ENCODE measurements at regions of chr5 and their contacts with region 1.

Region 1: DNA sequence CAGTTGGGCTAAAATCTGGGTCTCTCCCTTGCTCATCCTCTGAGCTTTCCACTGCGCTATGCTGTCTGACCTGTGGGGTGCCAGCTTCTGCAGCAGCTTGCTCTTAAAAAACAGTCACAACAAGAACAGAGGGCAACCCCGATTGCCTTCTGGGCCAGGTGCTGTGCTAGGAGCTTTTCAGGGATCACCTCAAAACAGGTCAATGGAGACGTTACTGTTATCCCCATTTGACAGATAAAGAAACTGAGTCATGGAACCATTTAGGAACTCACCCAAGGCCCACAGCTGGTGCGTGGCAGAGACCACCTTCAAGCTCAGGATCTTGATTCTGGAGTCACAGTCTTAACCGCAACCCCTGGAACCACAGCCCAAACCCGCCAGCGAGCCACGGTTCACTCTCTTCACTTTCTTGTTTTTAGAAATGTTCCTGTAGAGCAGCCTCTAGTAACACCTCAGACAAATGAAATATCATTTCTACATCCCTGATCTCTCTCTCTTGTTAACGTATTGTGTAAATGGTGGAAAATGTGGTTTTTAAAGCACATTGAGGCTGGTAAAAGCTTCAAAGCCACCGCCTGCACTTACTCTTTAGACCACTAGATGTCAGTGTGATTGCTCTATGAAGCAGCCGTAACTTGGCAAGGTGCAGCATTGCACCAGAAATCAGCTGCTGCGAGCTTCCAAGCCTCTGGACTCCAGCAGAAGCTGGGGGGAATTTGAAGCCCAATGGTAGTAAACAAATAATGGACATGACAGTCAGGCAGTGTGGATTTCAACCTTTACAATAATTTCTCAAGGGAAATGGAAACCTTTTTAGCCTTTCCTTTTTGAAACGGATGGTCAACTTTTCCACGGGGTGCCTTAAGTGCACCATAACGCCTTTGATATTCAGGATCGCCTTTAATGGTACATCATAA is 1.7 kb downstream of the FYB1 start:
- DNase-seq: peak; percentile 80
- H3K4me3 ChIP-seq: no peak overlapping the region
- H3K27ac ChIP-seq: peak overlapping the region; percentile 69
- H3K4me1 ChIP-seq: peaks cover 52% of the 10 kb centered on the region
- H3K27me3 ChIP-seq: no peaks in the 10 kb centered on the region
- CTCF ChIP-seq: peak; percentile 99

Region 2: DNA sequence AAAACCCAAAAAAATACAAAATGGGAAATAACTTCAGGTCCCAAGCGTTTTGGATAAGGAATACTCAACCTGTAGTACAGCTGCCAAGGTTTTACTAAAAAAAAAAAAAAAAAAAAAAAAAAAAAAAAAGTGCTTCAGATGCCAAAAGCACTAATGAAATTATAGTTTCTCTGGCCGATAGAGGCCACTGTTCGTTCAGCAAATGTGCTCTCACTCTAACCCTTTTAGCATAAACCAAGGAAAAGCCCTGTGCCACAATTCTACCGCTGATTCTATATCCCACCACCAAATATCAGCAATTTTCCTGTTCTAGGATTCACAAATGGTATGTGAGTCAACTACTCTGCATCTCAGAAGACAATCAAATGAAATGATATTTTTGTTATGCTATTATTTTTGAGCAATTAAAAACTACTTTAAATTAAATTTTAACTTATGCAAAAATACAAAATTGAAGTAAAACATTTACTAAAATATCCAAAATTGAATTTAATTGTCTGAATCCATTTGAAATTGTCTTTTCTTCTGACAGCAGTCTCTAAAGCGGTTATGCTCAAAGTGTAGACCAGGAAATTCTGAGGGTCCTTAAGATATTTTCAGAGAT is 223.2 kb before region 1 on chr5:
- CTCF ChIA-PET with region 1: interaction called, 6 read pairs
- POLR2A ChIA-PET with region 1: no interaction called
- intact Hi-C with region 1: loop called (anchors 2 kb)
- DNase-seq: peak; percentile 50 to 73
- H3K4me3 ChIP-seq: no peak overlapping the region
- H3K27ac ChIP-seq: no peak overlapping the region
- H3K4me1 ChIP-seq: no peaks in the 10 kb centered on the region
- H3K27me3 ChIP-seq: no peaks in the 10 kb centered on the region
- CTCF ChIP-seq: peak; percentile 80

Region 3: DNA sequence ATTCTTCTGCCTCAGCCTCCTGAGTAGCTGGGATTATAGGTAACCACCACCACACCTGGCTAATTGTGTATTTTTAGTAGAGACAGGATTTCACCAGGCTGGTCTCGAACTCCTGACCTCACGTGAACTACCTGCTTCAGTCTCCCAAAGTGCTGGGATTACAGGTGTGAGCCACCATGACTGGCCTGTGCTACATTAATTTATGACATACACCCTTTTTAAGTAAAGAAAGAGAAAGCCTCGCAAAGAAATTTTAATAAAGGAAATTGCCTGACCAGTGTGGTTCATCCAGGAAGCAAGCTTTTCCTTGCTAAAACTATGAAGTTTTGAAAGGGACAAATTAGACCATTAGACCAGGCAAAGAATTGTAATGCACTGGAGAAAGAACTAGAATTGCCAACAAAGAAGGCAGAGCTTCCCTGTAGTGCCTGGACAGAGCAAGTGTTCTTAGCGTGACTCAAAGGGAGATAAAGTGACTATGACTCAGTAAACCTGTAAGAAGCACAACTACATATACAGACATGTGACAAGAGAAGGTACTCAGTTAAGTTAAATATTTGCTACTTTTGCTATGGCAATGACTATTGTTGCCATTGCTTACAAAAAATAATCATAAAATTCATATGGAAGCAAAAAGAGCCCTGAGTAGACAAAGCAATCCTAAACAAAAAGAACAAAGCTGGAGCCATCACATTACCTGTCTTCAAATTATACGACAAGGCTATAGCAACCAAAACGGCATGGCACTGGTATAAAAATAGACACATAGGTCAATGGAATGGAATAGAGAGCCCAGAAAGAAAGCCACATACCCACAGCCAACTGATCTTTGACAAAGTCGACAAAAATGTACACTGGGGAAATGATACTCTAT is 52.9 kb before region 1 on chr5:
- CTCF ChIA-PET with region 1: no interaction called
- POLR2A ChIA-PET with region 1: interaction called, 11 read pairs
- intact Hi-C with region 1: no loop called
- DNase-seq: no peak
- H3K4me3 ChIP-seq: no peak overlapping the region
- H3K27ac ChIP-seq: no peak overlapping the region
- H3K4me1 ChIP-seq: peaks cover 14% of the 10 kb centered on the region
- H3K27me3 ChIP-seq: no peaks in the 10 kb centered on the region
- CTCF ChIP-seq: no peak

Region 4: DNA sequence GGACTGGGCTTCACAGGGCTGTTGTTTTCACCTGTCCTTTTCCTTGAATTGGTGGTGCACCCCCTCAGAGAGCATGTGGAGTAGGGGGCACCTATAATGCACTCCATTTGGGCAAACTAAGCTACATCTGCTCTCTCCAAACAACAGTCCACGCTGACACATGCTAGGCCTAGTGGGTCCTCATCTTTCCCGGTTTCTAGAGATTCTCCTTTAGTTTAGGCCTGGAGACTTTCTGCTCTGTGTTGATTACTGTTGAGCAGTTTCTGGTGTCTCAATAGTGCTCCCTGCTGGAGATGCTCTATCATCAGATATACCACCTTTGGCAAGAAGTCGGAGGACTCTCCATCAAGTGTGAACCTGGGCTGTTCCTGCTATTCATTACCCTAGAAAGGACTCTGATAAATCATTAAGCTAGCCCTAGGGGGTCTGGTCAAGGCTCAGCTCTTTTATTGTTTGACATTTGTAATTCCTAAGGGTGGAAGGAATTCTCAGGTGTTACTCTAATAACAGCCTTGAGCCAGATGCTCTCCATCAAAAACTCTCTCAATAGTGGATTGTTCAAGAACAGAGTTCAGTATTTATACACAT is 65.7 kb after region 1 on chr5:
- CTCF ChIA-PET with region 1: interaction called, 22 read pairs
- POLR2A ChIA-PET with region 1: interaction called, 5 read pairs
- intact Hi-C with region 1: loop called (anchors 1 kb)
- DNase-seq: peak; percentile 61 to 64
- H3K4me3 ChIP-seq: no peak overlapping the region
- H3K27ac ChIP-seq: no peak overlapping the region
- H3K4me1 ChIP-seq: no peaks in the 10 kb centered on the region
- H3K27me3 ChIP-seq: no peaks in the 10 kb centered on the region
- CTCF ChIP-seq: peak; percentile 91

Region 5: GRCh38 chr5:39424736-39425637 is 207.4 kb after region 1 on chr5 and contains the start of gene DAB2:
- CTCF ChIA-PET with region 1: interaction called, 5 read pairs
- POLR2A ChIA-PET with region 1: interaction called, 5 read pairs
- intact Hi-C with region 1: loop called (anchors 5 kb)
- DNase-seq: peak; percentile 80 to 92
- H3K4me3 ChIP-seq: peak within 1 kb of the TSS; percentile 72
- H3K27ac ChIP-seq: peak within 1 kb of the TSS; percentile 49
- H3K4me1 ChIP-seq: peaks cover 28% of the 10 kb centered on the region
- H3K27me3 ChIP-seq: no peaks in the 10 kb centered on the region
- CTCF ChIP-seq: peak; percentile 64
- total RNA-seq, gene DAB2: 21.0 and 25.8 TPM in 2 replicates

Region 6: GRCh38 chr5:39578887-39579497 is 361.4 kb after region 1 on chr5:
- CTCF ChIA-PET with region 1: interaction called, 10 read pairs
- POLR2A ChIA-PET with region 1: no interaction called
- intact Hi-C with region 1: no loop called
- DNase-seq: no peak
- H3K4me3 ChIP-seq: no peak overlapping the region
- H3K27ac ChIP-seq: no peak overlapping the region
- H3K4me1 ChIP-seq: no peaks in the 10 kb centered on the region
- H3K27me3 ChIP-seq: no peaks in the 10 kb centered on the region
- CTCF ChIP-seq: peak; percentile 92

Measured in PC-9 (cell line).